ENCODE measurements at regions of chr16 and their contacts with region 1.

Region 1: DNA sequence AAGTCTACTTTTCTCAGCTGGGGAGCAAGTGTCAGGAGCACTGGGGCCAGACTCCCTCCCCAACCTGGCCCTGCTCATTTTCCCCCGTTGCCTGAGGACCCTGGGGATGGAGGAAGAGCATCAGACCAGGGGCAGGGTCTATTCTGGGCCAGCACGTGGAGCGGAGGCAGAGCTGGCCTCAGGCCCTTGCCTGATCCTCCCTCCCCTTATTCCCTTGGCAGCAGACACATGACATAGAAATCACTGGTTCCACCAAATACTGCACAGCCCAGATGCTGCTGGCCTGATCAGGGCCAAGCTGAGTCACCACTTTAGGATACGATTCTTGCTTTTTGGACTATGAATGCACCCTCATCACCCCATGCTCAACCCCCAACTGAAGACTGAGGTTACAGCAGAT is 15.8 kb upstream of the AGRP start:
- DNase-seq: no peak
- ATAC-seq: no peak
- H3K4me3 ChIP-seq: no peak overlapping the region
- H3K27ac ChIP-seq: no peak overlapping the region
- H3K4me1 ChIP-seq: no peaks in the 10 kb centered on the region
- H3K27me3 ChIP-seq: no peaks in the 10 kb centered on the region
- CTCF ChIP-seq: no peak

Region 2: DNA sequence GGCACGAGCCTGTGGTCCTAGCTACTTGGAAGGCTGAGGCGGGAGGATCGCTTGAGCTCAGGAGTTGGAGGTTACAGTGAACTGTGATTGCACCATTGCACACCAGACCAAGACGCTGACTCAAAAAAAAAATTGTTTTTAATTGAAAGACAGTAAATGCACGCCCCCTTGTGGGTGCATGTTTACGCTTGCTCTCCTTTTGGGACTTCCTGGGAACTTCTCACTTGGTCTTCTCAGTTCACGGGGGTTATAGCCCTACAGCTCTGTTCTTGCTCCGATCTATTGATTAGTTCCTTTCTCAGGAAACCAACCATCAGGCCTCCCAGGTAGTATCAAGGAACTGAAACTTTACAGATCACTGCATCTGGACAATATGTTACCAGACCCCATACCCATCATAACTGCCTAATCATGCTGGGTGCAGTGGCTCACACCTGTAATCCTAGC is 15.3 kb after region 1 on chr16:
- CTCF ChIA-PET with region 1: interaction called, 7 read pairs
- POLR2A ChIA-PET with region 1: no interaction called
- intact Hi-C with region 1: loop called (anchors 1 kb)
- DNase-seq: peak; percentile 85
- ATAC-seq: peak; percentile 76
- H3K4me3 ChIP-seq: no peak overlapping the region
- H3K27ac ChIP-seq: no peak overlapping the region
- H3K4me1 ChIP-seq: peaks cover 12% of the 10 kb centered on the region
- H3K27me3 ChIP-seq: no peaks in the 10 kb centered on the region
- CTCF ChIP-seq: peak; percentile 66

Measured in PC-3 (cell line).